ENCODE measurements at regions of chr11 and their contacts with region 1.

Region 1: GRCh38 chr11:64185816-64186498 is at the start of gene STIP1:
- DNase-seq: peak; percentile 99
- H3K4me3 Mint-ChIP-seq: peak within 1 kb of the TSS; percentile 94
- H3K27ac Mint-ChIP-seq: peak within 1 kb of the TSS; percentile 98
- H3K4me1 Mint-ChIP-seq: peaks cover 33% of the 10 kb centered on the region
- H3K27me3 Mint-ChIP-seq: no peaks in the 10 kb centered on the region
- total RNA-seq, gene STIP1: 480 and 484 TPM in 2 replicates

Region 2: GRCh38 chr11:64165849-64166635 is 19.9 kb before region 1 on chr11 and contains the start of gene MACROD1:
- intact Hi-C with region 1: loop called (anchors 2 kb)
- DNase-seq: peak; percentile 73
- H3K4me3 Mint-ChIP-seq: peak within 1 kb of the TSS; percentile 91
- H3K27ac Mint-ChIP-seq: peak within 1 kb of the TSS; percentile 69
- H3K4me1 Mint-ChIP-seq: peaks cover 2% of the 10 kb centered on the region
- H3K27me3 Mint-ChIP-seq: no peaks in the 10 kb centered on the region
- total RNA-seq, gene MACROD1: 23.4 and 26.7 TPM in 2 replicates

Region 3: DNA sequence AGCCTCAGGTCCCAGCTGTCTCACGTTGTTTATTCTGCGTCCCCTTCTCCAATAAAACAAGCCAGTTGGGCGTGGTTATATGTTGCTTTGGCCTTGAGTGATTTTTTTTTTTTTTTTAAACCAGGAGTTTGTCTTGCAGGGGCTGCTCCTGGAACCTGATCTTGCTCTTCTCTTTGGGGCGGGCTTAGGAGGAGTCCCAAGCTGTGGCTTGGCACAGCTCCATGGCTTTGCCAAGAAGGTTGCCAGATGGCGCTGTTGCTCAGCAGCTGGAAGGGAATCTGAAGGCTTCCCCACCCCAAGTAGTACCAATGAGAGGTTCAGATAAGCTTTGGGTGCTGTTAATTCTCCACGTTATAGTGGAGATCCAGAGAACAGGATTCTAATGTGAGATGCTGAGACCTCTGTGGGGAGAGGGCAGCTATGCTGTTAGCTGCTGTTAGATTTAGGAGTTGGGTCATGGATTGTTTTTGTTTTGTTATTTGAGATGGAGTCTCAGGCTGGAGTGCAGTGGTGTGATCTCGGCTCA is 18.6 kb after region 1 on chr11:
- intact Hi-C with region 1: loop called (anchors 1 kb)
- DNase-seq: peak; percentile 67
- H3K4me3 Mint-ChIP-seq: peak overlapping the region; percentile 75
- H3K27ac Mint-ChIP-seq: peak overlapping the region; percentile 81
- H3K4me1 Mint-ChIP-seq: peaks cover 21% of the 10 kb centered on the region
- H3K27me3 Mint-ChIP-seq: no peaks in the 10 kb centered on the region

Region 4: DNA sequence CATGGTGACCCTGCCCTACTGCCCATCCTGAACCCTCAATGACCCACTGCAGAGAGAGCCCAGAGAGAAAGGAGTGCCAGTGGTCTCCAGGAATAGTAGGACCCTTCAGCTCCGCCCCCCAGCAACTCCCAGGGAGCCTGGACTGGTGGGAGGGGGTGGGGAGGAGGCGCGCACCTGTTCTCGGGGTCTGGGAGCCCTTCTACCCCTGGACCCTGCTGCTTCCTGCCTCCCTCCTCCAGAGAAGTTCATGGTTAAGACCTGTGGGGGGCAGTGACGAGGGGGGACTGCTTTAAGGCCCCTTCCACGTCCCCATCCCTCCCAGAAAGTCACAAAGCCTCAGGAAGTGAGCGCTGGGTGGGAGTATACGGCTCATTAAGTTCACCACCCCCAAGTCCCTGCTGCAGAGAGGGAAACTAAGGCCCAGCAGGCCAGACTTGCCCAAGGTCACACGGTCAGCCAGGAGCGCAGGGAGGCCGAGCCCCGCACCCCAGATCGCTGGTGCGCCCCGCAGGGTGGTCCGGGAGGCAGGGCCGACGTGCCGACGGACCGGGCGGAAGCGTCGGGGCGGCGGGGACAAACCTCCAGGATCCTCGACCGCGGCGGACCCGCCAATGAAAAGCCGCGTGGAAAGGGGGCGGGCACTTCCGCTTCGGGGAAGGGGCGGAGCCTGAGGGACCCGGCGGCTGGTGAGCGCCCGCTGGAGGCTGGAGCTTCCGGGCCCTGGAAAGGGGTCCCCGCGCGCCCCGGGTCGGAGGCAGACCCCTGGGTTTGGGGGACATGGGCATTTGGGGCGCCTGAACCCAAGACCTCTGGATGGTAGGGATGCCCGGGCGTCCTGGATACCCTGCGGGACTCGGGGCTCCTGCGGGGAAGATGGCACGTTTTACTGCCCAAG is 39.9 kb after region 1 on chr11 and contains the starts of genes NUDT22 and TRPT1:
- intact Hi-C with region 1: loop called (anchors 5 kb)
- DNase-seq: peak; percentile 91
- H3K4me3 Mint-ChIP-seq: peak within 1 kb of the TSS; percentile 84
- H3K27ac Mint-ChIP-seq: peak within 1 kb of the TSS; percentile 62
- H3K4me1 Mint-ChIP-seq: peaks cover 21% of the 10 kb centered on the region
- H3K27me3 Mint-ChIP-seq: no peaks in the 10 kb centered on the region
- total RNA-seq, gene NUDT22: 72.8 and 77.0 TPM in 2 replicates
- total RNA-seq, gene TRPT1: 33.7 and 35.5 TPM in 2 replicates

Region 5: GRCh38 chr11:64240394-64241174 is 54.6 kb after region 1 on chr11 and contains the start of gene FKBP2:
- intact Hi-C with region 1: loop called (anchors 2 kb)
- DNase-seq: peak; percentile 98
- H3K4me3 Mint-ChIP-seq: peak within 1 kb of the TSS; percentile 94
- H3K27ac Mint-ChIP-seq: peak within 1 kb of the TSS; percentile 93
- H3K4me1 Mint-ChIP-seq: peaks cover 21% of the 10 kb centered on the region
- H3K27me3 Mint-ChIP-seq: no peaks in the 10 kb centered on the region
- total RNA-seq, gene FKBP2: 36.6 and 37.1 TPM in 2 replicates

Region 6: DNA sequence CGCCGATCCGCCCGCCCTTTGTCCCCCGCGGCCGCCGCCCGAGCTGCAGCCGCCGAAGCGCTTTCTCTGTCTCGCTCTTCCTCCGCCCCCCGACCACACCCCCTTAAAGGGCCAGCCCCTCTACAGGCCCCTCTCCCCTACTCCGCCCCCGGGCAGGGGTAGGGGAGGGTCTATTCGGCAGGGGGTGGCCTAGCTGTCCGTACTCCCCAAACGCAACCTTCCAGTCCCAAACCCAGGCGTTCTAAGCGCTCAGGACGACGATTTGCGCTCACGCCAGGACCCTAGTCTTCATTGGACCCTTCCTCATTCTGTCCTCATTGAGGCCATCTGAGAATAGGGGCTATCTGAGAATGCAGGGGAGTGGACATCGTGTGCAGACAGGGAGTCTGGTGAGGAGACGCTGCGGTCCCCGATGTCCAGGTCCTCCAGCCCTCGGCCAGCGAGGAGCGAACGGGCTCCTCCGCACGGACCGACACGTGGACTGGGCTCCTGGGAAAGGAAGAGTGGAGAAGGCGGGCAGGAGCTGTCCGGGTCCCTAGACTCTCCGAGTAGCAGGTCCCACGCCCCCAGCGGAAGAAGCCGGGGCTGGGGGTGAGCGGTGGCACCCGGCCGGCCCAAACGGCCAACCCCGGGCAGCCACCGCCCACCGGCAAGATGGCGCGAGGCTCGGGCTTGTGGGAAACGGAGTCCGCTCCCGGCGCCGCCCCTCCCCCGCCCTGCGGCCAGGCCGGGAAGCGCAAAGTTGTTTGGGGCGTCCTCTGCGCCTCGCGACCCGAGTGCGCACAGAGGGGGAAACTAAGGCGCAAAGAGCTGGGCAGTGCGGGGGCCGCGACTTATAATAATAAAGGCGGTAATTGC is 61.1 kb after region 1 on chr11 and contains the start of gene PPP1R14B:
- intact Hi-C with region 1: loop called (anchors 1 kb)
- DNase-seq: peak; percentile 78
- H3K4me3 Mint-ChIP-seq: peak within 1 kb of the TSS; percentile 91
- H3K27ac Mint-ChIP-seq: peak within 1 kb of the TSS; percentile 88
- H3K4me1 Mint-ChIP-seq: peaks cover 28% of the 10 kb centered on the region
- H3K27me3 Mint-ChIP-seq: no peaks in the 10 kb centered on the region
- total RNA-seq, gene PPP1R14B: 262 and 273 TPM in 2 replicates

Region 7: GRCh38 chr11:64269380-64270234 is 83.7 kb after region 1 on chr11:
- intact Hi-C with region 1: loop called (anchors 1 kb)
- DNase-seq: peak; percentile 97
- H3K4me3 Mint-ChIP-seq: peak overlapping the region; percentile 91
- H3K27ac Mint-ChIP-seq: peak overlapping the region; percentile 84
- H3K4me1 Mint-ChIP-seq: peaks cover 15% of the 10 kb centered on the region
- H3K27me3 Mint-ChIP-seq: no peaks in the 10 kb centered on the region